H1 (cell line): ENCODE measurements at regions of chr12 and their contacts with region 1.

Region 1: DNA sequence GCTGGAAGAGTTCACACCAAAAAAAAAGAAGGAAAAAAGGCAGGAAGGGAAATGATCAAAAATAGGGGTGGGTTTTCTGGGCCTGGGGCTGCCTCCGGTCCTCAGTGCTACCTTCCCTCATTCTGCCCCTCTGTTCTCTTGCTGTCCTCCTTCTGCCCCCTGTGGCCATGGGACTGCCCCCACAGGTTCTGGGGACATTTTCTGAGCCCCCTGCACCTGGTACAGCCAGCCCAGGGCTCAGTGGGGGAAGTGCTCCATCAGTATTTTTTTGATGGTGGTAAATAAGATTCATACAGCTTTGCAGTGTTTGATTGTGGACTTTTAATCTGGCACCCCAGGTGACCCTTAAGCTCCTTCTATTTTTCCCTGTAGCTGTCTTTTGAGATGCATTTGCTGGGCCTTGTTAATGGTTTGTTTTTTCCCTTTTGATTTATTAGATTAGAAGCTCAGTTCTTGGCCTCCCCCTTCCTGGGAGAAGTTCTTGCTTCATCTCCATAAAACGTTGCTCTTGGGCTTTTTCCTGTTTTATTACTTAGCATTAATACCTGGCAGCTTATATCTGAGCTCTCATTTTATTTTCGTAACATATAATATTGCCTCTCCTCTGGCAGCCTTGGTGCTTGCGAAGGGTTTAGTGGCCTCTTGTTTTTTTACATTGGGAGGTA is 43.1 kb downstream of the CHST11 start:
- DNase-seq: no peak
- H3K4me3 ChIP-seq: no peak overlapping the region
- H3K27ac ChIP-seq: no peak overlapping the region
- H3K4me1 ChIP-seq: peaks cover 0 to 4% (median 2%) of the 10 kb centered on the region in 4 experiments; a peak in 4 of 7 replicates
- H3K27me3 ChIP-seq: no peaks in the 10 kb centered on the region
- CTCF ChIP-seq: no peak
- EP300 ChIP-seq: no peak
- POLR2A ChIP-seq: no peak
- RAD21 ChIP-seq: no peak; a peak in 1 of 4 replicates

Region 2: DNA sequence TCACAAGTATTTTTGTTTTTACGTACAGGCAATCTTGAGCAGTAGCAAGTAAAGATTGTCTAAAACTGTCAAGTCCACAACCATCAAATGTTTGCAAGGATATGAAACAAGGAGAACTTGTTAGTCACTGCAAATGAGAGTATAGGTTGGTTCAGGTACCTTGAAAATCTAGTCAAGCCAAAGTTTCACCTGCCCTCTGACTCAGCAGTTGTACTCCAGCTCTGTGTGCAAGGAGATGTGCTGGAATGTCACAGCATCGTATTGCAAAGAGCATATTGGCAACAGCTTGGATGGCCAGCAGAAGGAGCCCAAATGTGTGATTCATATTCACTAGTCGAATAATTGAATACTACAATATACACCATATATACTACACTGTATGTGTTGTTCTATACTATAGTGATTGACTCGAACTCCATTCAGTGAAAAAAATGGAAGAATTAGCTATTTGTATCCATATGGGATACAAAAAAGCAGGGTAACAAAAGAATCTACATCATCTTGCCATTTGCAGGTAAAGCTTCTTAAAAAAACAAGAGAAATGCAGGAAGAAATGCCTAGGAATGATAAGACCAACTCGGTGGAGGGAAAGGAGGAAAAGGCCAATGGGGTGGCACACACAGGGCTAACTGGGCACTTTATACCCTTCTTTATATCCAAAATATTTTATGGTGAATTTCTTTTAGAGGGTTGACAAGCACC is 152.3 kb before region 1 on chr12:
- CTCF ChIA-PET with region 1: no interaction called
- POLR2A ChIA-PET with region 1: no interaction called
- DNase-seq: no peak
- H3K4me3 ChIP-seq: no peak overlapping the region
- H3K27ac ChIP-seq: no peak overlapping the region
- H3K4me1 ChIP-seq: peaks cover 0 to 8% (median 6%) of the 10 kb centered on the region in 4 experiments; a peak in 5 of 7 replicates
- H3K27me3 ChIP-seq: no peaks in the 10 kb centered on the region
- CTCF ChIP-seq: no peak
- EP300 ChIP-seq: no peak
- POLR2A ChIP-seq: no peak
- RAD21 ChIP-seq: no peak

Region 3: GRCh38 chr12:104456417-104456949 is 43.3 kb before region 1 on chr12 and contains the start of gene CHST11:
- CTCF ChIA-PET with region 1: no interaction called
- POLR2A ChIA-PET with region 1: interaction called, 10 read pairs
- DNase-seq: peak; percentile 71 to 90
- H3K4me3 ChIP-seq: peak within 1 kb of the TSS; percentile 61 to 98 (median 84)
- H3K27ac ChIP-seq: no peak within 1 kb of the TSS
- H3K4me1 ChIP-seq: peaks cover 9 to 17% (median 12%) of the 10 kb centered on the region in 4 experiments; a peak in 6 of 7 replicates
- H3K27me3 ChIP-seq: peaks cover 0 to 31% (median 18%) of the 10 kb centered on the region in 4 experiments; a peak in 6 of 7 replicates
- CTCF ChIP-seq: peak in 2 of 3 experiments; percentile 21 to 28; a peak in 3 of 4 replicates
- EP300 ChIP-seq: peak in 1 of 2 experiments; percentile 95; a peak in 1 of 3 replicates
- POLR2A ChIP-seq: no peak
- RAD21 ChIP-seq: peak; percentile 38 to 48
- total RNA-seq, gene CHST11: 14.4 and 15.5 TPM in 2 replicates